ENCODE measurements at regions of chr6 and their contacts with region 1.

Region 1: GRCh38 chr6:26234421-26235296 is 130.3 kb upstream of the BTN3A2 start:
- DNase-seq: peak; percentile 80 to 89
- ATAC-seq: peak; percentile 85 to 87
- H3K4me3 ChIP-seq: peak overlapping the region; percentile 56
- H3K27ac ChIP-seq: peak overlapping the region; percentile 94 to 98
- H3K4me1 ChIP-seq: peaks cover 22% of the 10 kb centered on the region
- CTCF ChIP-seq: no peak
- EP300 ChIP-seq: no peak
- POLR2A ChIP-seq: peak; percentile 37; the same call in 1 of the 2 replicates
- RAD21 ChIP-seq: no peak

Region 2: DNA sequence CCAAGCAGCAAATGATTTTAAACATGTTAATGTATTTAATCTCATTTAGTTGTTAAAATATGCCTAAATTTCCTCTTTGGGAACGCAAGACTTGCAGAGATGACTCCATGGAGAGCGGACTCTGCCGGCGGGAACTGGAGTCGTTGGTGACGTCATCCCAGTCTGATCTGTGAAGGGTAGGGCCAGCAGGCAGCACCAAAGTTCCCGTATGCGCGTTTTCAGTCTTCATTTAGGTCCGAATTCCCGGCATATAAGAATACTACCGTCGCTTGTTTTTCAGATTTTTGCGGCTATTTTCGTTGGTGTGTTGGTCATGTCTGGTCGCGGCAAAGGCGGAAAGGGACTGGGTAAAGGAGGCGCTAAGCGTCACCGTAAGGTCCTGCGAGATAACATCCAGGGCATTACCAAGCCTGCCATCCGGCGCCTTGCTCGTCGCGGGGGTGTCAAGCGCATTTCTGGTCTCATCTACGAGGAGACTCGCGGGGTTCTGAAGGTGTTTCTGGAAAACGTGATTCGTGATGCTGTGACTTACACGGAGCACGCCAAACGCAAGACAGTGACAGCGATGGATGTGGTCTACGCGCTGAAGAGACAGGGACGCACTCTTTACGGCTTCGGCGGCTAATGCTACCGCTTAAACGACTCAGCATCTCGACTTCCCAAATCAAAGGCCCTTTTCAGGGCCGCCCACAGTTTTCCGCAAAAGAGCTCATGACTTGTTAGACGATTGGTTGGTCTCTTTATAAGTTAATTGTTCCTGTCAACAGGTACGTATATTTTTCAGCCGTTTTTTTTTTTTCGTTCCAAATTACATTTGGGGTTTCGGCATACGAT is 30.1 kb before region 1 on chr6:
- CTCF ChIA-PET with region 1: no interaction called
- POLR2A ChIA-PET with region 1: interaction called, 24 read pairs
- DNase-seq: peak; percentile 92 to 97
- ATAC-seq: peak; percentile 83
- H3K4me3 ChIP-seq: peak overlapping the region; percentile 81
- H3K27ac ChIP-seq: peak overlapping the region; percentile 88 to 97
- H3K4me1 ChIP-seq: peaks cover 14% of the 10 kb centered on the region; the same call in 2 of the 3 replicates
- CTCF ChIP-seq: no peak
- EP300 ChIP-seq: peak; percentile 41 to 57; a peak in 2 of 5 replicates
- POLR2A ChIP-seq: peak; percentile 95
- RAD21 ChIP-seq: no peak

Region 3: GRCh38 chr6:26223650-26224546 is 10.8 kb before region 1 on chr6:
- CTCF ChIA-PET with region 1: interaction called, 4 read pairs
- POLR2A ChIA-PET with region 1: interaction called, 35 read pairs
- DNase-seq: peak; percentile 63 to 91
- ATAC-seq: peak; percentile 85 to 95
- H3K4me3 ChIP-seq: peak overlapping the region; percentile 60
- H3K27ac ChIP-seq: peak overlapping the region; percentile 93 to 95
- H3K4me1 ChIP-seq: peaks cover 8% of the 10 kb centered on the region; the same call in 2 of the 3 replicates
- CTCF ChIP-seq: no peak
- EP300 ChIP-seq: no peak
- POLR2A ChIP-seq: no peak
- RAD21 ChIP-seq: no peak

Region 4: DNA sequence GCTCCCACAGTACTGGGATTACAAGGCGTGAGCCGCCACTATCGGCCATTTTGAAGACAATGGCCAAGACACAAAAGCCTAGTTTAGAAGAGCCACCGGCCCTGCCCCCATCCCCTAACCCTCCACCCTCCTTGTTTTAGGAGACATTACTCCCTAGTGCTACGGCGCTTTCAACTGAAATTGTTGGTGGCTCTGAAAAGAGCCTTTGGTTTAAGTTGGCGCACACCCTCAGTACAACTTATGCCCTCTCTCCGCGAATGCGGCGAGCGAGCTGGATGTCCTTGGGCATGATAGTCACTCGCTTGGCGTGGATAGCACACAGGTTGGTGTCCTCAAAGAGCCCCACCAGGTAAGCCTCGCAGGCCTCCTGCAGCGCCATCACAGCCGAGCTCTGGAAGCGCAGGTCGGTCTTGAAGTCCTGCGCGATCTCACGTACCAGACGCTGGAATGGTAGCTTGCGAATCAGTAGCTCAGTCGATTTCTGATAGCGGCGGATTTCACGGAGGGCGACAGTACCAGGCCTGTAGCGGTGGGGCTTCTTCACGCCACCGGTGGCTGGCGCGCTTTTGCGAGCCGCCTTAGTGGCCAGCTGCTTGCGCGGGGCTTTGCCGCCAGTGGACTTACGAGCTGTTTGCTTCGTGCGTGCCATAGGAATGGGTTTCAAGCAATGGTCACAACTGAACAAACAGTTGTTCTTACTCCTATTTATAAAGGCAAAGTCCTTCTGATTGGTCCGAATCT is 15.5 kb after region 1 on chr6:
- CTCF ChIA-PET with region 1: interaction called, 5 read pairs
- POLR2A ChIA-PET with region 1: interaction called, 33 read pairs
- DNase-seq: peak in 1 of 2 experiments; percentile 82
- ATAC-seq: peak; percentile 91 to 95
- H3K4me3 ChIP-seq: peak overlapping the region; percentile 49
- H3K27ac ChIP-seq: peak overlapping the region; percentile 84 to 91
- H3K4me1 ChIP-seq: no peaks in the 10 kb centered on the region
- CTCF ChIP-seq: no peak
- EP300 ChIP-seq: no peak
- POLR2A ChIP-seq: peak; percentile 63
- RAD21 ChIP-seq: no peak

Region 5: GRCh38 chr6:26272171-26272637 is 37.5 kb after region 1 on chr6:
- CTCF ChIA-PET with region 1: interaction called, 4 read pairs
- POLR2A ChIA-PET with region 1: interaction called, 52 read pairs
- DNase-seq: no peak
- ATAC-seq: no peak
- H3K4me3 ChIP-seq: peak overlapping the region; percentile 77; the same call in 1 of the 3 replicates
- H3K27ac ChIP-seq: peak overlapping the region; percentile 96 to 98
- H3K4me1 ChIP-seq: peaks cover 12% of the 10 kb centered on the region
- CTCF ChIP-seq: no peak
- EP300 ChIP-seq: no peak
- POLR2A ChIP-seq: no peak
- RAD21 ChIP-seq: no peak

Region 6: GRCh38 chr6:26285143-26286134 is 50.8 kb after region 1 on chr6:
- CTCF ChIA-PET with region 1: no interaction called
- POLR2A ChIA-PET with region 1: interaction called, 25 read pairs
- DNase-seq: peak; percentile 65 to 99
- ATAC-seq: peak; percentile 81 to 90
- H3K4me3 ChIP-seq: peak overlapping the region; percentile 64
- H3K27ac ChIP-seq: peak overlapping the region; percentile 93 to 94
- H3K4me1 ChIP-seq: peaks cover 34% of the 10 kb centered on the region
- CTCF ChIP-seq: no peak
- EP300 ChIP-seq: peak; percentile 37 to 63; a peak in 2 of 5 replicates
- POLR2A ChIP-seq: peak; percentile 92
- RAD21 ChIP-seq: no peak